Activated CD4-positive, alpha-beta T cell treated with anti-CD3 and anti-CD28 coated beads for 36 hours (primary cell): ENCODE measurements at regions of chr10 and their contacts with region 1.

Region 1: GRCh38 chr10:103966671-103967447 is at the start of gene SLK:
- DNase-seq: peak; percentile 90
- ATAC-seq: peak; percentile 82
- H3K4me3 Mint-ChIP-seq: peak within 1 kb of the TSS; percentile 97
- H3K27ac Mint-ChIP-seq: peak within 1 kb of the TSS; percentile 95
- H3K4me1 Mint-ChIP-seq: peaks cover 30% of the 10 kb centered on the region
- H3K27me3 Mint-ChIP-seq: no peaks in the 10 kb centered on the region
- total RNA-seq, gene SLK: 20.2 to 32.5 TPM

Region 2: GRCh38 chr10:103584216-103585010 is 382.4 kb before region 1 on chr10:
- CTCF ChIA-PET with region 1: no interaction called
- POLR2A ChIA-PET with region 1: no interaction called
- intact Hi-C with region 1: loop called in 1 of 2 experiments (anchors 1 kb)
- DNase-seq: peak; percentile 83
- ATAC-seq: peak; percentile 69
- H3K4me3 Mint-ChIP-seq: peak overlapping the region; percentile 79
- H3K27ac Mint-ChIP-seq: peak overlapping the region; percentile 95
- H3K4me1 Mint-ChIP-seq: peaks cover 10% of the 10 kb centered on the region
- H3K27me3 Mint-ChIP-seq: no peaks in the 10 kb centered on the region

Region 3: DNA sequence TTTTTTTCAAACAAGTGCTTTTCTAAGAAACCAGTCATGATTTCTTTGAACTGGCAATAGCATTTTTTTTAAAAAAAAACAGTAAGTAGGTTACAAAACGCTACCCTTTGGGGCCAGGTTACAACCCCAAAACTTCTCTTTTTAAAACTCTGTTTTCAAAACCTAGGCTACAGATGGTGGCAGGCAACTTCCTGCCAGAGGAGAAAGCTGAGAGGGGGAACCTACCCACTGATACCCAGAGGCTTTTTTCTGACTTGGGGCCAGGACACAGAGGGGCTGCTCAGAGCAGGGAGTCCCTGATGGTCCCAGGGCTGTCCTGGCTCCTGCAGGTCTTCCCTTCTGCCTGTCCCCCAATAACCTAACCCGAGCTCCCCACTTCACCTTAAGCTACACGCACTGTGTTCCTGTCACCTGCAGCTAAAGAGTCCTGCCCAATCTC is 55.8 kb before region 1 on chr10:
- CTCF ChIA-PET with region 1: no interaction called
- POLR2A ChIA-PET with region 1: no interaction called
- intact Hi-C with region 1: loop called in 1 of 2 experiments (anchors 1 kb)
- DNase-seq: peak; percentile 49
- ATAC-seq: peak; percentile 42
- H3K4me3 Mint-ChIP-seq: peak overlapping the region; percentile 57
- H3K27ac Mint-ChIP-seq: peak overlapping the region; percentile 98
- H3K4me1 Mint-ChIP-seq: peaks cover 70% of the 10 kb centered on the region
- H3K27me3 Mint-ChIP-seq: no peaks in the 10 kb centered on the region

Region 4: DNA sequence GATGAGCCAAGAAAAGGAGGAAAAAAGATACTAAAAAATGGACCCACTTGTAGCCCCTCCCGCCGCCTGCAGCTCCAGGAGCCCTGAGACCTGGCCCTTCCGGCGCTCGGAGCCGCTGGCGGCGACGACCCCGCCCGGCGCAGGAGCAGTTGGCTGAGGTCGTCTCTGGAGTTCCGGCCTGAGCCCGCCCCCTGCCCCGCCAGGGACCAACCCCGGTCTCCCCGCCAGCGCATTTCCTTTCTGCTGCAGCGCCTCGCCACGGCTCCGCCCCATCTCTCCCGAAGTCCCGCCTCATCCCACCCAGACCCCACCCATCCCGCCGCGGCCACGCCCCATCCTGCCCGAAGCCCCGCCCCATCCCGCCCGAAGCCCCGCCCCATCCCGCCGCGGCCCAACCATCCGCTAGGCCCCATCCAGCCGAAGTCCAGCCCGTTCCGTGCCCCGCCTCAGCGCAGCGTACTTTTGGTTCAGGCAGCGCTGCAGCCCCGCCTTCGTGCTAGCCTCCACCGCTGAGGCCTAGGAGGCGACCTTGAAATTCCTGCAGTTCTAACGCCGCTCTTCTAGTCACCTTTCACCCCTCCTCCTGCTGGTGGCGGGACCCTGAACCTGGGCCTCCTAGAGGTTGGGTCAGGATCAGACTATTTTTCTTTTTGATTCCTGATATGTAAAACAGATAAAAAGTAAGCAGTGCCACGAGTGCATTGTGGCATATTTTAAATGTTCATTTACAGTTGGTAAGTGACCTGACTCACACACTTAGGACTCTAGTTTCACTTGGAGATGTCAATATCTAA is 48.6 kb before region 1 on chr10 and contains the start of gene STN1:
- CTCF ChIA-PET with region 1: interaction called, 4 read pairs
- POLR2A ChIA-PET with region 1: no interaction called
- intact Hi-C with region 1: loop called (anchors 1 to 2 kb)
- DNase-seq: peak; percentile 98
- ATAC-seq: peak; percentile 93
- H3K4me3 Mint-ChIP-seq: peak within 1 kb of the TSS; percentile 96
- H3K27ac Mint-ChIP-seq: peak within 1 kb of the TSS; percentile 99
- H3K4me1 Mint-ChIP-seq: peaks cover 32% of the 10 kb centered on the region
- H3K27me3 Mint-ChIP-seq: no peaks in the 10 kb centered on the region
- total RNA-seq, gene STN1: 34.4 to 37.4 TPM

Region 5: GRCh38 chr10:103951928-103952327 is 14.9 kb before region 1 on chr10:
- CTCF ChIA-PET with region 1: no interaction called
- POLR2A ChIA-PET with region 1: no interaction called
- intact Hi-C with region 1: no loop called
- DNase-seq: no peak
- ATAC-seq: no peak
- H3K4me3 Mint-ChIP-seq: no peak overlapping the region
- H3K27ac Mint-ChIP-seq: no peak overlapping the region
- H3K4me1 Mint-ChIP-seq: peaks cover 8% of the 10 kb centered on the region
- H3K27me3 Mint-ChIP-seq: no peaks in the 10 kb centered on the region

Region 6: GRCh38 chr10:103983367-103983911 is 16.6 kb after region 1 on chr10:
- CTCF ChIA-PET with region 1: no interaction called
- POLR2A ChIA-PET with region 1: no interaction called
- intact Hi-C with region 1: loop called in 1 of 2 experiments (anchors 2 kb)
- DNase-seq: no peak
- ATAC-seq: peak; percentile 91
- H3K4me3 Mint-ChIP-seq: peak overlapping the region; percentile 39
- H3K27ac Mint-ChIP-seq: peak overlapping the region; percentile 83
- H3K4me1 Mint-ChIP-seq: peaks cover 70% of the 10 kb centered on the region
- H3K27me3 Mint-ChIP-seq: no peaks in the 10 kb centered on the region